ENCODE measurements at regions of chr20 and their contacts with region 1.

Region 1: GRCh38 chr20:50790651-50791277 is 4.1 kb upstream of the BCAS4 start:
- DNase-seq: peak; percentile 85
- ATAC-seq: peak; percentile 79
- H3K4me3 ChIP-seq: no peak overlapping the region
- H3K27ac ChIP-seq: peak overlapping the region; percentile 77
- H3K4me1 ChIP-seq: peaks cover 17% of the 10 kb centered on the region
- H3K27me3 ChIP-seq: no peaks in the 10 kb centered on the region
- CTCF ChIP-seq: peak; percentile 82
- POLR2A ChIP-seq: peak; percentile 42; the same call in 1 of the 2 replicates
- RAD21 ChIP-seq: peak; percentile 53

Region 2: DNA sequence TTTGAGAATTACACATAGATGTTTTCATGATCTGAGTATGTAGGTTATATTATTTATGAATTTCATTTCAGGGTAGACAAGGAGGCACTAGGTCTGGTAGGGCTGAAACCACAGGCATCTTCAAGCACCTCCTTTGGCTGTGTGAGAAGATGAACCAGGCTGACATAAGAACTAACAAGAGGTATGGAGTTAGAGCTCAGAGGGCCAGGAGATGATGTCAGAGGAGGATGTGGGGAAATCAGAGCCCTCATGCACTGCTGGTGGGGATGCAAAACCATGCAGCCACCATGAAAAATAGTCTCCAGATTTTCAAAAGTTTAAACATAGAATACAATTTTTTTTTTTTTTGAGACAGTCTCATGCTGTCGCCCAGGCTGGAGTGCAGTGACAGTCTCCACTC is 85.8 kb before region 1 on chr20:
- CTCF ChIA-PET with region 1: no interaction called
- POLR2A ChIA-PET with region 1: no interaction called
- dilution Hi-C with region 1: no loop called
- in situ Hi-C with region 1: no loop called
- intact Hi-C with region 1: no loop called
- DNase-seq: peak; percentile 87
- ATAC-seq: peak; percentile 83
- H3K4me3 ChIP-seq: no peak overlapping the region
- H3K27ac ChIP-seq: no peak overlapping the region
- H3K4me1 ChIP-seq: peaks cover 2% of the 10 kb centered on the region
- H3K27me3 ChIP-seq: no peaks in the 10 kb centered on the region
- CTCF ChIP-seq: no peak
- POLR2A ChIP-seq: no peak
- RAD21 ChIP-seq: no peak

Region 3: GRCh38 chr20:50717974-50718761 is 72.6 kb before region 1 on chr20:
- CTCF ChIA-PET with region 1: no interaction called
- POLR2A ChIA-PET with region 1: no interaction called
- dilution Hi-C with region 1: no loop called
- in situ Hi-C with region 1: no loop called
- intact Hi-C with region 1: no loop called
- DNase-seq: no peak
- ATAC-seq: peak; percentile 51
- H3K4me3 ChIP-seq: no peak overlapping the region
- H3K27ac ChIP-seq: no peak overlapping the region
- H3K4me1 ChIP-seq: peaks cover 4% of the 10 kb centered on the region; the same call in 1 of the 2 replicates
- H3K27me3 ChIP-seq: no peaks in the 10 kb centered on the region
- CTCF ChIP-seq: 0 out of 2 replicates have a peak, but pooled peaks have one; percentile 17
- POLR2A ChIP-seq: no peak
- RAD21 ChIP-seq: no peak

Region 4: GRCh38 chr20:50834599-50835005 is 43.8 kb after region 1 on chr20:
- CTCF ChIA-PET with region 1: no interaction called
- POLR2A ChIA-PET with region 1: no interaction called
- dilution Hi-C with region 1: no loop called
- in situ Hi-C with region 1: no loop called
- intact Hi-C with region 1: no loop called
- DNase-seq: peak; percentile 94
- ATAC-seq: peak; percentile 71
- H3K4me3 ChIP-seq: no peak overlapping the region
- H3K27ac ChIP-seq: peak overlapping the region; percentile 25; the same call in 1 of the 2 replicates
- H3K4me1 ChIP-seq: peaks cover 9% of the 10 kb centered on the region
- H3K27me3 ChIP-seq: no peaks in the 10 kb centered on the region
- CTCF ChIP-seq: no peak
- POLR2A ChIP-seq: no peak
- RAD21 ChIP-seq: no peak

Region 5: DNA sequence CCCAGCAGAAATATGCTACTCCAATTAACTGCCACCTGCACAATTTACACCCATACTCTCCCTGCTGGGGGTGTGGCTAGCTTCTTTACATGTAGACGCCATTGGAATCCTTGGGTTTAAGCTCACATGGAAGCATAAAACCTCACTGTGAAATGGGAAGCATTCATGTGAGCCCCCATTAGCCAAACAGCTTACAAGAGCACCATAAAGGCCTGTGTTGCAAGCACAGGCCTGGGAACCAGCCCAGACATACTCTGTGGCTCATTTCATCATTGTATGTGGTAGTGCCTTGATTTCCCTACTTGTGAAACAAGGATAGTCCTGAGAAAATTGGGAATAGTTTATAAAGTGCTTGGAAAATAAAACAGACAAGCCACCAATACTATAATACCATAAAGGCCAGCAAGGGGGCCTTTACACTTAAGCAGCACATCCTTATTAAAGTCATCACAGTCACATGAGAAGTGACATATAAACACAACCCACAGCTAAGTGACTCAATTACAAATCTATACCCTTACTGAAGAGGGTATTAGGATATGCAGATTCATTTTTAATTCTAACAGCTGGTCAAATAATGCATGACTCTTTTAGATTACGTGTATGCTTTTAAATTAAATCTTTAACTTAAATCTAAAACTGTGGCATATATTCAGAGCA is 133.6 kb after region 1 on chr20:
- CTCF ChIA-PET with region 1: interaction called, 16 read pairs
- POLR2A ChIA-PET with region 1: interaction called, 4 read pairs
- dilution Hi-C with region 1: no loop called
- in situ Hi-C with region 1: no loop called
- intact Hi-C with region 1: loop called (anchors 1 kb)
- DNase-seq: peak; percentile 43
- ATAC-seq: peak; percentile 25
- H3K4me3 ChIP-seq: no peak overlapping the region
- H3K27ac ChIP-seq: no peak overlapping the region
- H3K4me1 ChIP-seq: peaks cover 16% of the 10 kb centered on the region
- H3K27me3 ChIP-seq: no peaks in the 10 kb centered on the region
- CTCF ChIP-seq: no peak
- POLR2A ChIP-seq: no peak
- RAD21 ChIP-seq: no peak

Region 6: GRCh38 chr20:50929299-50930138 is 138.8 kb after region 1 on chr20:
- CTCF ChIA-PET with region 1: interaction called, 16 read pairs
- POLR2A ChIA-PET with region 1: interaction called, 4 read pairs
- dilution Hi-C with region 1: no loop called
- in situ Hi-C with region 1: no loop called
- intact Hi-C with region 1: loop called (anchors 1 kb)
- DNase-seq: peak; percentile 97
- ATAC-seq: peak; percentile 56
- H3K4me3 ChIP-seq: peak overlapping the region; percentile 95
- H3K27ac ChIP-seq: peak overlapping the region; percentile 94
- H3K4me1 ChIP-seq: peaks cover 18% of the 10 kb centered on the region
- H3K27me3 ChIP-seq: no peaks in the 10 kb centered on the region
- CTCF ChIP-seq: peak; percentile 99
- POLR2A ChIP-seq: peak; percentile 25; the same call in 1 of the 2 replicates
- RAD21 ChIP-seq: peak; percentile 81

Region 7: DNA sequence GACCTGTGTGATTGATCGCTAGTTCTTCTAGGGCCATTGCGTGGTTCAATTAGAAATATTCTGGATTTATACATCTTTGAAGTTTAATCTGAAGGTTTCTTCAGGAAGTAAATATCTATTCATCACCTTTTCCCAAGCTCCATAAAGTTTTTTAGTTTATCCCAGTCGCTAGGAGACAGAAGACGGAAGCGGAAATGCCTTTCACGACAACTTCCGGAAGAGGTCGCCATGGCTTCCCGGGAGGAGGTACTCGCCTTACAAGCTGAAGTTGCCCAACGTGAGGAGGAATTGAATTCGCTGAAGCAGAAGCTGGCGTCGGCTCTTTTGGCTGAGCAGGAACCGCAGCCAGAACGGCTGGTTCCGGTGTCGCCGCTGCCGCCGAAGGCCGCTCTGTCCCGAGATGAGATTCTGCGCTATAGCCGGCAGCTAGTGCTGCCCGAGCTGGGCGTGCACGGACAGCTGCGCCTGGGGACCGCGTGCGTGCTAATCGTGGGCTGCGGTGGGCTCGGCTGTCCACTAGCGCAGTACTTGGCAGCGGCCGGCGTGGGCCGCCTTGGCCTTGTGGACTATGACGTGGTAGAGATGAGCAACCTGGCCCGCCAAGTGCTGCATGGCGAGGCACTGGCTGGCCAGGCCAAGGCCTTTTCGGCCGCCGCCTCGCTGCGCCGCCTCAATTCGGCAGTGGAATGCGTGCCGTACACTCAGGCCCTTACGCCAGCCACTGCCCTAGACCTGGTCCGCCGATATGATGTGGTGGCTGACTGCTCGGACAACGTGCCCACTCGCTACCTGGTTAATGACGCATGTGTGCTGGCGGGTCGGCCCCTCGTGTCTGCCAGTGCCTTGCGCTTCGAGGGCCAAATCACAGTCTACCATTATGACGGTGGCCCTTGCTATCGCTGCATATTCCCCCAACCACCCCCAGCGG is 168.1 kb after region 1 on chr20 and contains the start of gene MOCS3:
- CTCF ChIA-PET with region 1: no interaction called
- POLR2A ChIA-PET with region 1: no interaction called
- dilution Hi-C with region 1: no loop called
- in situ Hi-C with region 1: no loop called
- intact Hi-C with region 1: loop called (anchors 2 kb)
- DNase-seq: peak; percentile 93
- ATAC-seq: peak; percentile 83
- H3K4me3 ChIP-seq: peak within 1 kb of the TSS; percentile 91
- H3K27ac ChIP-seq: peak within 1 kb of the TSS; percentile 93
- H3K4me1 ChIP-seq: peaks cover 10% of the 10 kb centered on the region
- H3K27me3 ChIP-seq: no peaks in the 10 kb centered on the region
- CTCF ChIP-seq: 0 out of 2 replicates have a peak, but pooled peaks have one; percentile 0
- POLR2A ChIP-seq: peak; percentile 78; the same call in 1 of the 2 replicates
- RAD21 ChIP-seq: no peak; the same call in 1 of the 2 replicates
- total RNA-seq, gene MOCS3: 9.9 and 11.4 TPM in 2 replicates

Region 8: GRCh38 chr20:50980851-50981713 is 190.3 kb after region 1 on chr20:
- CTCF ChIA-PET with region 1: interaction called, 4 read pairs
- POLR2A ChIA-PET with region 1: no interaction called
- dilution Hi-C with region 1: no loop called
- in situ Hi-C with region 1: no loop called
- intact Hi-C with region 1: loop called (anchors 1 kb)
- DNase-seq: peak; percentile 75
- ATAC-seq: peak; percentile 41
- H3K4me3 ChIP-seq: no peak overlapping the region
- H3K27ac ChIP-seq: peak overlapping the region; percentile 38
- H3K4me1 ChIP-seq: peaks cover 24% of the 10 kb centered on the region
- H3K27me3 ChIP-seq: no peaks in the 10 kb centered on the region
- CTCF ChIP-seq: peak; percentile 87
- POLR2A ChIP-seq: peak; percentile 55; the same call in 1 of the 2 replicates
- RAD21 ChIP-seq: peak; percentile 67

Region 9: DNA sequence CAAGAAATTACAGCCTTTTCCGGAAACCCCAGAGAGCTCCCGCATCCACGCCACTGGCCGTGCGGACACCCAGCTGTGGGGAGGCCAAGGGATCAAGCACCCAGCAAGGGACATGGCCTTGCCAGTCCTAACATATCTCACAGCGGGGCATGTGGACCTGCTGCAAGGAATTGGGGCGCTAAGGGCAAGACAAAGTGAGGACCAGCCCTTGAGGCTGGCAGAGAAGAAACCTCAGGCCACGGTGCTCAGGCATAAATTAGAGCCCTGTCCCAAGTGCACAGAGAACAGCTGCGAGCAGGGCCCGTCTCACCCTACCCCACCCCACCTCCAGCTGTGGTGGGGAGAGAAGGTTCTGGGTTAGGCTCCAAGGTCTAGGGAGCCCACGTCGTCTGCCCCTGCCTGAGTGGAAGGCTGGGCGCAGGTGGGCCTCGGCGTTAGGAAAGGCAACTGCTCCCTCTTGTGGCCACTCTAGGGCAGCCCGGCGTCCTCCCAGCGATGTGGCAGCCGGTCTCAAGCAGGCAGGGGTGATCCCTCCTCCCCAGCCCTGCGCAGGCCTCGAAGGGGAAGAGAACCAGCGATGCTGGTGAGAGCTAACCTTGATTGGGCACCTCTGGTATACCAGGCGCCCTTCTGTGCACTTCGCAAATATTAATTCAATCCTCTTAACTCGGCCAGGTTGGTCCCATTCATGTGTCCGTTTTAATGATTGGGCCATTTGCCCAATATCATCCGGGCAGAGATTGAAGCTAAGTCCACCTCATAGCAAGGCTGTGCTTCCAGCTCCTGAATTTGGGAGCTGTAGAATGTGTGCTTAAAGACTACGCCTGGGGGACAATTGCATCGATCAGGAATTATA is 516.0 kb after region 1 on chr20:
- CTCF ChIA-PET with region 1: no interaction called
- POLR2A ChIA-PET with region 1: no interaction called
- dilution Hi-C with region 1: no loop called
- in situ Hi-C with region 1: no loop called
- intact Hi-C with region 1: loop called (anchors 5 kb)
- DNase-seq: peak; percentile 70
- ATAC-seq: peak; percentile 97
- H3K4me3 ChIP-seq: no peak overlapping the region
- H3K27ac ChIP-seq: no peak overlapping the region
- H3K4me1 ChIP-seq: peaks cover 5% of the 10 kb centered on the region; the same call in 1 of the 2 replicates
- H3K27me3 ChIP-seq: no peaks in the 10 kb centered on the region
- CTCF ChIP-seq: peak; percentile 94
- POLR2A ChIP-seq: no peak; the same call in 1 of the 2 replicates
- RAD21 ChIP-seq: peak; percentile 98

Region 10: GRCh38 chr20:51326201-51326819 is 535.5 kb after region 1 on chr20:
- CTCF ChIA-PET with region 1: no interaction called
- POLR2A ChIA-PET with region 1: no interaction called
- dilution Hi-C with region 1: no loop called
- in situ Hi-C with region 1: loop called (anchors 10 kb)
- intact Hi-C with region 1: no loop called
- DNase-seq: peak; percentile 76
- ATAC-seq: 0 out of 2 replicates have a peak, but pooled peaks have one; percentile 16
- H3K4me3 ChIP-seq: no peak overlapping the region
- H3K27ac ChIP-seq: no peak overlapping the region; the same call in 1 of the 2 replicates
- H3K4me1 ChIP-seq: peaks cover 18% of the 10 kb centered on the region
- H3K27me3 ChIP-seq: no peaks in the 10 kb centered on the region
- CTCF ChIP-seq: peak; percentile 63
- POLR2A ChIP-seq: peak; percentile 85; the same call in 1 of the 2 replicates
- RAD21 ChIP-seq: peak; percentile 48

Region 11: DNA sequence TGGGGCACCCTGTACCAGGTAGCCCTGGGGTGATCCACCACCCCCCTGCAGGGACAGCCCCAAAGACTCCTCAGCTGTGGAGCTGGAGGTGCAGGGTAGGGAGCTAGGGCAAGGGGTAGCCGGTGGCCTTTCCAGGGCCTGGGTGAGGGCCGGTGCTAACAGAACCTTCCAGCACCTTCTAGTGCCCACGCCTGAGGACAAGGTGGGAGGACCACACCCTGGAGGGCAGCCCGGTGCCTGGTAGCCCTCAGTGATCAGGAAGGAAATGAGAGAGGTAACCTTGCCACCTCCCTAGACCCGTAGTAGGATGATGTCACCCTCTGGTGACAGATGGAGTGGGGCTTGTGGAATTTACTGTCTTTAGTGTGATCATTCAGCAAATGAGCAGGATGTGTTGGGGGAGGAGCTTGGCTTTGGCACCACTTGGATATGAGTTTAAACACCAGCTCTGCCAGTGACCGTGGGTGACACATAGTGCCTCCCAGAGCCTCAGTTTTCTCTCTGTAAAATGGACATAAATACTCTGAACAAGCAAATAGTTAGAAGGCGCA is 564.1 kb after region 1 on chr20:
- CTCF ChIA-PET with region 1: no interaction called
- POLR2A ChIA-PET with region 1: no interaction called
- dilution Hi-C with region 1: no loop called
- in situ Hi-C with region 1: no loop called
- intact Hi-C with region 1: no loop called
- DNase-seq: peak; percentile 84
- ATAC-seq: peak; percentile 30
- H3K4me3 ChIP-seq: no peak overlapping the region
- H3K27ac ChIP-seq: peak overlapping the region; percentile 78
- H3K4me1 ChIP-seq: peaks cover 28% of the 10 kb centered on the region
- H3K27me3 ChIP-seq: no peaks in the 10 kb centered on the region
- CTCF ChIP-seq: no peak
- POLR2A ChIP-seq: peak; percentile 50
- RAD21 ChIP-seq: no peak

Measured in IMR-90 (cell line).